OCI-LY7 (cell line): ENCODE measurements at regions of chr16 and their contacts with region 1.

Region 1: GRCh38 chr16:12803203-12804097 is at the start of gene CPPED1:
- DNase-seq: peak; percentile 95
- H3K4me3 ChIP-seq: peak within 1 kb of the TSS; percentile 86
- H3K27ac ChIP-seq: peak within 1 kb of the TSS; percentile 77
- H3K4me1 ChIP-seq: peaks cover 21% of the 10 kb centered on the region
- CTCF ChIP-seq: no peak
- total RNA-seq, gene CPPED1: 8.6 and 9.4 TPM in 2 replicates

Region 2: GRCh38 chr16:10883004-10883403 is 1920.4 kb before region 1 on chr16:
- CTCF ChIA-PET with region 1: no interaction called
- POLR2A ChIA-PET with region 1: no interaction called
- intact Hi-C with region 1: loop called (anchors 5 kb)
- DNase-seq: no peak
- H3K4me3 ChIP-seq: no peak overlapping the region
- H3K27ac ChIP-seq: no peak overlapping the region
- H3K4me1 ChIP-seq: peaks cover 83% of the 10 kb centered on the region
- CTCF ChIP-seq: no peak

Region 3: GRCh38 chr16:12340151-12340733 is 463.2 kb before region 1 on chr16:
- CTCF ChIA-PET with region 1: no interaction called
- POLR2A ChIA-PET with region 1: no interaction called
- intact Hi-C with region 1: loop called (anchors 5 kb)
- DNase-seq: peak; percentile 67
- H3K4me3 ChIP-seq: no peak overlapping the region
- H3K27ac ChIP-seq: no peak overlapping the region
- H3K4me1 ChIP-seq: peaks cover 61% of the 10 kb centered on the region
- CTCF ChIP-seq: peak; percentile 89

Region 4: DNA sequence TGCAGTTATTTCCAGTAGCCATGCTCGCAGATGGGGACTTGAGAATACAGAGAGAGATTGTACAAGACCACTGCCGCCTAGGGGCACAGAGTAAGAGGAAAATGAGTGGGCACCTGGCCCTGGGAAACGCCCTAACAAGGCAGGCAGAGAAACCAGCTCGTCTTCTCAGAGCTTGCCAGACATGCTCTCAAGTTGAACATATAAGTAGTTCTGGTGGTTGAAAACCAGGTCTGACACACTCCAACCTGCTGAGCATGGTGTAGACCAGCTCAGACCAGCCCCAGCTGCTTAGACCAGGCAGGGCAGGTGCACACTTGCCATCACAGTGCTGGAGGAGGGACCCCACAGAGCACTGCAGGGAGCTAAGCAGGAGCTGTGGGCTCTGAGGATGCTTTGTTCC is 250.3 kb before region 1 on chr16:
- CTCF ChIA-PET with region 1: no interaction called
- POLR2A ChIA-PET with region 1: no interaction called
- intact Hi-C with region 1: loop called (anchors 5 kb)
- DNase-seq: peak; percentile 52
- H3K4me3 ChIP-seq: no peak overlapping the region
- H3K27ac ChIP-seq: peak overlapping the region; percentile 98
- H3K4me1 ChIP-seq: peaks cover 93% of the 10 kb centered on the region
- CTCF ChIP-seq: peak; percentile 54

Region 5: DNA sequence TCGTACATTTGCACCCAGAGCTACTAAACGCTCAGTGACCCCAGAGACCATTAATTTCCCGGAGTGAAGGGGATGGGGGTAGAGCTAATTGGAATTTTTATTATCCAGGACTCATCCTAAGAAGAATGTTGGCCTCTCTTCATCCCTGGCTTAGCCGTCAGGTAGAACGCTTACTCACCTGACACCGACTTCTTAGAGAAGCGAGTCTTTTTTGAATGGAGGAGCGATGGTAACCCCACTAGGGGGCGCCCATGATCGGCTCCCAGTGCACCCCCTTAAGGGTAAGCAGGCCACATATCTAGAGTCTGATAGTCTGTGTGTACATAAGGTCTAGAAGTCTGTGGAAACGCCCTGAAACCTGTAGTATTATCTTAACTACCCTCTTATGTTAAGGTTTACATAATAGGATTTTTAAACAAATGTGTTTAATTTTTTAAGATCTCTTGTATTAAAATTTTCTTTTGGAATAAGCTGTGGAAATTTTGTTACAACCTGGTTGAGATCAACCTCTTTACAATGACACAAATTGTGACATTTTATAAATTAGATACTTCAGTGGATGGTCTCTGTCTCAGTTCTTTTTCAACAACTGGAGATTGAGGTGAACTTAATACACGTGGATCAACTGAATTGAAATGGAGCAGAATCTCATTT is 229.6 kb before region 1 on chr16:
- CTCF ChIA-PET with region 1: no interaction called
- POLR2A ChIA-PET with region 1: no interaction called
- intact Hi-C with region 1: loop called (anchors 2 kb)
- DNase-seq: peak; percentile 66
- H3K4me3 ChIP-seq: no peak overlapping the region
- H3K27ac ChIP-seq: peak overlapping the region; percentile 51
- H3K4me1 ChIP-seq: peaks cover 59% of the 10 kb centered on the region
- CTCF ChIP-seq: peak; percentile 99

Region 6: GRCh38 chr16:14097182-14097959 is 1293.9 kb after region 1 on chr16:
- CTCF ChIA-PET with region 1: no interaction called
- POLR2A ChIA-PET with region 1: interaction called, 10 read pairs
- intact Hi-C with region 1: no loop called
- DNase-seq: no peak
- H3K4me3 ChIP-seq: no peak overlapping the region
- H3K27ac ChIP-seq: no peak overlapping the region
- H3K4me1 ChIP-seq: peaks cover 11% of the 10 kb centered on the region
- CTCF ChIP-seq: no peak